Activated CD4-positive, alpha-beta memory T cell treated with anti-CD3 and anti-CD28 coated beads, Interleukin-2, amount 10 ng/mL, durations not matched to agents 7 days and 5 days (primary cell): ENCODE measurements at regions of chr11 and their contacts with region 1.

Region 1: DNA sequence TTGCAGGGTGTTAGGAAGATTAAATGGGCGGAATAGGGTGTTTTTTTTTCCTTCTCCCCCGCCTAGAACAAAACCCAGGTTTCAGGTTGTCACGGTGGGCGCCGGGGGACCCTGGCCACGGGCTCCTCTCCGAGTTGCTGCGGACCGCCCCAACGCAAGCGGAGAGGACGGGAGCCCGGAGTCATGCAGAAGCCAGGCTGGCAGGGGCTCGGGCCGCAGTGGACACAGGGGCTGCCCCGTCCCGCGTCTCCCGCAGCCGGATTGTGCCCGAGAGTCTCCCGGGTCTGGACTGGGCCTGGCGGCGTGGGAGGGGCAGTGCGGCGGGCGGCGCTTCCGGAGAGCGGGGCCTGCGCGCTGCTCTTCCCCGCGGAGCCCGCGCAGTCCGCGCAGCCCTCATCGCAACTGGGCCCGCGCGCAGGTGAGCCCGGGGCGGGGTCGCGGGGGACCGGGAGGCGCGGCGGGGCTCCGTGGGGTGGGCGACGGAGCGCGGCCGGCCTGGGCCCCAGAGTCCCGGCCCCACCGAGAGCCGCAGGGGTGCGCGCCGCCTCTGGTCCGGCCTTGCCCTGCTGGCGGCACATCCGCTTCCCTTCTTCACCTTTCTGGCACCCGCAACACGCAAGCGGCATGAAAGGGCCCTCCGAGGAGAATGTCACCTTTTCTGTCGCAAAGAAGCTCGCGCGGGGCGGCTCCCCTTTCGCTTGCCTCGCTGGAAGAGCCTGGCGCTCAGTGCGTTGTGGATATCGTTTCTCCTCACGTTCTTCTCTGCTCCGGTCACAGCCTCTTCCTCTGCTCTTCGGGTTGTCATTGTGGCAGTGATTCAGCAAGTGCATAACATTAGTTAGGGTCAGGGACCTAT is at the start of gene TIRAP:
- DNase-seq: peak; percentile 70
- H3K4me3 Mint-ChIP-seq: peak within 1 kb of the TSS; percentile 100
- H3K27ac Mint-ChIP-seq: peak within 1 kb of the TSS; percentile 99
- H3K4me1 Mint-ChIP-seq: peaks cover 54% of the 10 kb centered on the region
- H3K27me3 Mint-ChIP-seq: no peaks in the 10 kb centered on the region
- total RNA-seq, gene TIRAP: 14.2 to 17.0 TPM

Region 2: DNA sequence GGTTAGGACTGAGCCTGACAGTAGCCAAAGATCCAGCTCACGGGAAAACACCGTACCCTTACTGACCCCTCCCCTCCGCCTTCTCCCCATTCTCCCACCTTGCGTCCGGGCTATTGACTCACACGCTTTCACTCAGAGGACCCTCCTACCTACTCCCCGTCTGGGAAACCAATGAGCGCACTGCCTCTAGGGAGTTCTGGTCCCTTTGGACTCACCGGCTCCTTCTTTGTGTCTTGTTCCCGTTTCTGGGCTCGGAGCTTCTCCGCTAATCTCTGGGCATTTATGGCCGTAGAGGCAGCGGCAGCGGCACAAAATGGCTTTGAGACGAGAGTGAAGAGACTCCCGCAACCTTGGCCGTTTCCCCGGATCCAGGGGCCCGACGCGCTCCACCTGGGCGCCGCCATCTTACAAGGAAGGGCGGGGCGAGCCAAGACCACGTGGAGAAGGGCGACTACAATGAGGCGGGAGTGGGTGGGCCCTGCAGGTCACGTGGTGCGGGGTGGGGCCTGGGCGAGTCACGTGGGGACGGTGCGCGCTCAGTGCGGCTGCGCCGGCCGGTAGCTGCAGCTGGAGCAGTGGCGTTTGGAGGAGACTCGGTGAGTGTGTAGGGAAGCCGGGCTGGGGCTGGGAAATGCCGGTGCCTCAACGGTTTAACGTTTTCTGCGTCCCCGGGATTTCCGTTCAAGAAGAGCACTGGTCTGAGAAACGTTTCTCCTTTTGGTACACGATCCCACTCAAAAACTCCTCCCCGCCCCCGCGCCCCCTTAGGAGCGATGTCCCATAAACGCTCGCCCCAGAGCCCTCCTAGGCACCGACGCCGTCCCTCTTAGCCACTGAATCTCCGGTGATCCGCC is 71.5 kb before region 1 on chr11 and contains the starts of genes FAM118B and RPUSD4:
- CTCF ChIA-PET with region 1: no interaction called
- POLR2A ChIA-PET with region 1: interaction called, 14 read pairs
- DNase-seq: peak; percentile 99
- H3K4me3 Mint-ChIP-seq: peak within 1 kb of the TSS; percentile 98
- H3K27ac Mint-ChIP-seq: peak within 1 kb of the TSS; percentile 84
- H3K4me1 Mint-ChIP-seq: peaks cover 43% of the 10 kb centered on the region
- H3K27me3 Mint-ChIP-seq: peaks cover 7% of the 10 kb centered on the region
- total RNA-seq, gene FAM118B: 9.0 to 9.9 TPM
- total RNA-seq, gene RPUSD4: 26.5 to 26.8 TPM

Region 3: DNA sequence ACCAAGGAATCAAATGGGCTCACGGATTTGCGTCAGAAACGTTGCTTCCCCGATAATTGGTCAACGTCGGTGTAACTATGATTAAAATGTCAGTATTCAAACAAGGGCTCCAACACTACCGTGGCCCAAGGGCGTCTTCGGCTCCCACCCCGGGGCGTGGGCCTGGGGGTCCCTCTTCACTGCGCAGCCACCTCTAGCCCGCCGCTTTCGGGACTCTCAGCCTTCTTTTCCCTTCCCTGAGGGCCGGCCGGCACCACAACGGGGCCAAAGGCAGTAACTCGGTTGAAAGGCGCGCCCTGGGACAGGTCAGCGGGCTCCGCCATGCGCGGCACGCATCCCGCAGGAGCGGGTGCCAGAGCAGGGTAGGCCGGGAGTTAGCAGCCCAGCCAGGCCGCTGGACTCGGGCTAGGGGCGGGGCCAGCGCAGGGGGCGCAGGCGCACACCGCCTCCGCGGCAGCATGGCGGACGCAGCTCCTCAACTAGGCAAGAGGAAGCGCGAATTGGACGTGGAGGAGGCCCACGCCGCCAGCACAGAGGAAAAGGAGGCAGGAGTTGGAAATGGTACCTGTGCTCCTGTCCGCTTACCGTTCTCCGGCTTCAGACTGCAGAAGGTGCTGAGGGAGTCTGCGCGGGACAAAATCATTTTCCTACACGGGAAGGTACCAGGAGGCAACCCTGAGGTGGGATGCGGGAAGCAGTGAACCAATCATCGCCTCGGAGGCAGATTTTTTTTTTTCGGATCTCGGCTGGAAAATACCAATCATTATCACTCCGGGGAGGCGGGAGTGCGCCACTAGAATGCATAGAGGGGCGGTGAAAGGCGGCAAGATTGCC is 20.9 kb after region 1 on chr11 and contains the start of gene DCPS:
- CTCF ChIA-PET with region 1: interaction called, 5 read pairs
- POLR2A ChIA-PET with region 1: interaction called, 19 read pairs
- DNase-seq: peak; percentile 90
- H3K4me3 Mint-ChIP-seq: peak within 1 kb of the TSS; percentile 77
- H3K27ac Mint-ChIP-seq: peak within 1 kb of the TSS; percentile 75
- H3K4me1 Mint-ChIP-seq: peaks cover 30% of the 10 kb centered on the region
- H3K27me3 Mint-ChIP-seq: no peaks in the 10 kb centered on the region
- total RNA-seq, gene DCPS: 34.5 to 35.8 TPM